A549 (cell line): ENCODE measurements at regions of chr17 and their contacts with region 1.

Region 1: GRCh38 chr17:50865984-50866774 is at the start of gene TOB1:
- DNase-seq: peak; percentile 90 to 98
- ATAC-seq: peak; percentile 72 to 86
- H3K4me3 ChIP-seq: peak within 1 kb of the TSS; percentile 92
- H3K27ac ChIP-seq: peak within 1 kb of the TSS; percentile 97 to 98
- H3K4me1 ChIP-seq: peaks cover 36% of the 10 kb centered on the region
- CTCF ChIP-seq: no peak
- EP300 ChIP-seq: 0 out of 5 replicates have a peak, but pooled peaks of 1 of the 2 experiments have one; percentile 36
- POLR2A ChIP-seq: peak; percentile 100
- RAD21 ChIP-seq: peak; percentile 7 to 8; a peak in 3 of 5 replicates
- polyA plus RNA-seq, gene TOB1: 101 and 133 TPM in 2 replicates

Region 2: DNA sequence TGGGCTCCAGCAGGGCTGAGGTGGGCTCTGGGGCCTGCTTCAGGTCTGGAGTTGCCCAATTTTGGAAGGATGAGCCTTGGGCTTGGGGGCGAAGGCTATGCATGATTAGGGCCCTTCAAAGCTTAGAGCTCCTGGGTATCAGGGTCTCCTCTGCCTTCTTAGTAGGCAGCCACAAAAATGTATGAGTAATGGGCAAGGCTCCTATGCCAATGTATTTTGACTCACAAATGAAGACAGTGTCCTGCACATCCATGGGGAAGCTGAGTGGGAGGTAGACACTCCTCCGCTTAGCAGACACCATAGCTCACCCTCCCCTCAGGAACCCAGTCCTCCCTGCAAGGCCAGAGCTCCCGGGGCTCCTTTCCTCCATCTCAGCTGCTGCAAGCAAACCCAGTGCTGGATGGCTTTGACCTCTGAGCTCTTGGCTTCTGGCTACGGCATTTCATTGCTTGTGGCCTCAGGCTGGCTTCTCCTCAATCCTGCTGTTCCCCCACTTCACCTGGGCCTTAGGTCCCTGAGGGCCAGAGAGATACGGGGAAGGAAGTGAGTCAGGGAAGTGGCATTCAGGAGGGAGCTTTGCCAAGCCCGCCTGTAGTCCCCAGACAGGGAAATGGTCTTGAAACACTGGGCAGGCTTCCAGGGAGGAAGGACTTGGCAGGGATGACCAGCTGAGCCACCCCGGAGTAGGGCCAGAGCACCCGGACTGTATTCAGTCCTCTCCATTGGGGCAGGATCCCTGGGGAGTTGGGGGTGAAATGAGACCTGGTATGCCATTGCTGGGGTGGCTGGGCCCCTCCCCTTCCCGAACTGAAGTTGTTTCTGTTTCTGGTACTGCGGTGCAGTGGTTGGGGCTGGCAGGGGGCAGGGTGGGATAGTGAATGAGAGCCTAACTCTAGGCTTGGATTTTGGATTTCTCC is 227.1 kb before region 1 on chr17:
- CTCF ChIA-PET with region 1: no interaction called
- POLR2A ChIA-PET with region 1: interaction called, 19 read pairs
- DNase-seq: peak; percentile 96 to 100
- ATAC-seq: peak; percentile 77 to 80
- H3K4me3 ChIP-seq: peak overlapping the region; percentile 92; the same call in 1 of the 3 replicates
- H3K27ac ChIP-seq: peak overlapping the region; percentile 99 to 100
- H3K4me1 ChIP-seq: peaks cover 78% of the 10 kb centered on the region
- CTCF ChIP-seq: no peak
- EP300 ChIP-seq: peak; percentile 85 to 95
- POLR2A ChIP-seq: no peak; the same call in 1 of the 2 replicates
- RAD21 ChIP-seq: peak; percentile 32 to 55

Region 3: DNA sequence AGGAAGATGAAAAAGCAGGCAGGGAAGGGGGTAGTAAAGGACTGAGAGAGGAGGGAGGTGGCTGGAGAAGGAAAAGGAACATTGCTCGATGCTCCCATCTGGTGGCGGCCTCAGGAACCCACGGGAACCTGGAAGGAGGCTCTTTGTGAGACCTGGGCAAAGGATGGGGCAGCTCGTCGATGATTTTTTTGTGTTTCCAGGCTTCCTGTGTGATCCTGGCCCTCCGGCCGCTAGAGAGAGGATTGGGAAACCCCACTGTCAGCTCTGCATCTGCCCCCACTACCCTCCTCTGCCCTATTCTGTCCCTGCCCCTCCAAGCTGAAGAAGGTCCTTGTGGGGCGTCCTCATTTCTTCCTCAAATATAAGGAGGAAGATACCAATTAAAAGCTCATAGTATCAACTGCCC is 24.2 kb before region 1 on chr17:
- CTCF ChIA-PET with region 1: interaction called, 197 read pairs
- POLR2A ChIA-PET with region 1: interaction called, 12 read pairs
- DNase-seq: peak; percentile 76 to 94
- ATAC-seq: peak; percentile 85 to 94
- H3K4me3 ChIP-seq: no peak overlapping the region
- H3K27ac ChIP-seq: 0 out of 6 replicates have a peak overlapping the region, but pooled peaks of 1 of the 2 experiments have one; percentile 17
- H3K4me1 ChIP-seq: peaks cover 13% of the 10 kb centered on the region
- CTCF ChIP-seq: peak; percentile 93
- EP300 ChIP-seq: no peak
- POLR2A ChIP-seq: no peak
- RAD21 ChIP-seq: peak; percentile 93 to 94

Region 4: DNA sequence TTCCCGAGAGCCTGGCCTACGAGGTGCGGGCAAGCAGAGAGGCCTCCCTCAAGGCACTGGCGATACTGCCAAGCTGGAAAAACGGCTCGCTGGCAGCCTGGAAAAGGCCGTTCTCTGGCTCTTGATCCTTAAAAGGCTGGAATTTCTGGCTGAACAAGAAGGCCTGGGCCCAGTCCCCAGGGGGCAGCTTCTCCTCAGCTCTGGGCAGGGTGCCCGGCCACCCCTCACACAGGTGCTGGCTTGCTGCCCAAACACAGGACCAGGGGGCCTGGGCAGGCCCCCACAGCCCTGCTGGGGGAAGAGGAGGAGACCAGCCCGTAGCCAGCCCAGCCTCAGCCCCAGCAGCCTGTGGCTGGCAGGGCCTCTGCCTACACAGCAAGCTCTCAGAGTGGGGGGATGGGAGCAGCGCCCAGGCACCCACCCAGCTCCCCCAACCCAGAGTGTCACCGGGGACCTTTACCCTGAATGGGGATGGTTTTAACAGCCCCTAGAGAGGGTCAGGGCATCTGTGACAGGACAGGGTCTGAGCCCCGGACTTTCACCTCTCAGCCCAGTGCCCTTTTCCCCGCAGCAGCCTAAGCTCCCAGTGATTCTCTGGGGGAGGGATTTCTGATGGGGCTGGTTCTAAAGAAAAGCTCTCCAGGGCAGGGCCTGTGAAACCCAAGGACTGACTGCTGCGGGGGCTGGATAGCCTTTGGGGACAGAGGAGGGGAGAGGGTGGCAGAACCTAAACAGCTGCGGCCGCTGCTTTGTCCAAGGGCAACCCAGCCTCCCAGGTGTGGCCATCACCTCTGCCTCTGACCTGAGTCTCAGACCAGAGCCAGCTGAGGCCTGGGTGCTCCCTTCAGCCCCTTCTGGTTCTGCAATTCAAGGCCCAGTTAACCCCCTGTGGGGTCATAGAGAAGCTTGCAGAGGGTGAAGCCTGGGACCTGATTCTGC is 38.6 kb after region 1 on chr17:
- CTCF ChIA-PET with region 1: interaction called, 4 read pairs
- POLR2A ChIA-PET with region 1: interaction called, 72 read pairs
- DNase-seq: no peak
- ATAC-seq: peak; percentile 33 to 58; a peak in 5 of 6 replicates
- H3K4me3 ChIP-seq: no peak overlapping the region
- H3K27ac ChIP-seq: peak overlapping the region; percentile 67 to 88
- H3K4me1 ChIP-seq: peaks cover 33% of the 10 kb centered on the region
- CTCF ChIP-seq: no peak
- EP300 ChIP-seq: no peak
- POLR2A ChIP-seq: no peak
- RAD21 ChIP-seq: no peak

Region 5: GRCh38 chr17:50931144-50931908 is 65.1 kb after region 1 on chr17:
- CTCF ChIA-PET with region 1: interaction called, 1,502 read pairs
- POLR2A ChIA-PET with region 1: interaction called, 173 read pairs
- DNase-seq: peak in 1 of 2 experiments; percentile 86
- ATAC-seq: peak; percentile 66 to 70
- H3K4me3 ChIP-seq: peak overlapping the region; percentile 27; the same call in 2 of the 3 replicates
- H3K27ac ChIP-seq: peak overlapping the region; percentile 94 to 98
- H3K4me1 ChIP-seq: peaks cover 63% of the 10 kb centered on the region
- CTCF ChIP-seq: no peak
- EP300 ChIP-seq: no peak; a peak in 1 of 5 replicates
- POLR2A ChIP-seq: peak; percentile 30
- RAD21 ChIP-seq: peak in 1 of 2 experiments; percentile 37; a peak in 3 of 5 replicates

Region 6: DNA sequence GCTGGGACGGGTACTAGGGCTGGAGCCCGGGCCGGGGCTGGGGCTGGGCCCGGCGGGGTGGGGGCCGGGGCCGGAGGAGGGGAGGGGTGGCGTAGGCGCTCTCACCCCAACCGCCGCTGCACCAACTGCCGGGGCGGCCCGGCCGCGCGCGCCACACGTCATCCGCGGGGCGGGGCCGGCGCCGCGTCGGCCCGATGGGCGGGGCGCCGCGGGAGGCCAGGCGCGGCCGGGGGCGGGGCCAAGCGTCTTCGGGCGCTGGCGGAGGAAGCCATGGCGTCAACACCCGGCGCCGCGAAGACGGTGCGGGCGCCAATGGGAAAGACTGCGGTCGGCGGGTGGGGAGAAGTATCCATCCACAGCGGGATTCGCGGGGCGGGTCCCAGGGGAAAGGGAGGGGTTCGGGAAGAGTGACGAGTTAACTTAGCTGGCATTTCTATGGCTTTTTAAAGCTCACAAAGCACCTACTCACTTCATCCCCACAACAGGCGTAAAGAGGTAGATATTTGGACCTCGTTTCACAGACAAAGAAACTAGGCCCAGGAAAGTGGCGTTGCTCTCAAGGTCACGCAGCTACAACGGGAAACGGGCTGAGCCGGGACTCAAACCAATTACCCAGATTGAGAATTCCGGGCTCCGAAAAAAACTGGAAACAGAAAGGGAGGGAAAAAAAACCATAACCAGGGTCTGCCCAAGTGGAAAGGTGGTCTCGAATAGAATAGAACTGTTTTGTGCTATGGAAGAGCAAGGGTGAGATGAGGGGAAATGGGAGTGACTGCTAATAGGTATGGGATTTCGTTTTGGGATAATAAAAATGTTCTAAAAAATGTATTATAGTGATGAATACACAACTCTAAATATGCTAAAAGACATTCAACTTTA is 254.8 kb after region 1 on chr17 and contains the start of gene SPAG9:
- CTCF ChIA-PET with region 1: no interaction called
- POLR2A ChIA-PET with region 1: interaction called, 30 read pairs
- DNase-seq: peak; percentile 97
- ATAC-seq: peak; percentile 80 to 82
- H3K4me3 ChIP-seq: peak within 1 kb of the TSS; percentile 77
- H3K27ac ChIP-seq: peak within 1 kb of the TSS; percentile 91 to 92
- H3K4me1 ChIP-seq: peaks cover 46% of the 10 kb centered on the region
- CTCF ChIP-seq: no peak
- EP300 ChIP-seq: no peak
- POLR2A ChIP-seq: peak; percentile 46
- RAD21 ChIP-seq: peak; percentile 4 to 5; a peak in 1 of 5 replicates
- polyA plus RNA-seq, gene SPAG9: 69.6 and 71.1 TPM in 2 replicates